ENCODE measurements at regions of chr14 and their contacts with region 1.

Region 1: DNA sequence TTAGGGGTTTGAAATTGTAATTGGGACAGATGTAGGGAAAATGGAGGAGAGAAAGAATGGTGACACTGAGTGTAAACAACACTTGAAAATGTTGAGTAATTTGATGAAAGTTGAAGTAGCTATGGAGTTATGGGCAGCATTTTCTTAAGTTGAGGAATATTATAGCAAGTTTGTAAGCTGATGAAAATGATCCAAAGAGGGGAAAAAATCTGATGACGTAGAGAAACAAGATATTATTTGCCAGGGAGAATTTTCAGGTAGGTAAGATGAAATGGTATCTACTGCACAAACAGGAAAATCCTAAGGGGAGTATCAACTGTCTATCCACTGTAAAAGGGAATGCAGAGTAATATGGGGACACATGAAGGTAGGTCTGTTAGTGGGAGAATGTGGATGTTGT is 517.4 kb downstream of the RPL10L start:
- DNase-seq: no peak
- ATAC-seq: no peak
- H3K4me3 ChIP-seq: no peak overlapping the region
- H3K27ac ChIP-seq: no peak overlapping the region
- H3K4me1 ChIP-seq: no peaks in the 10 kb centered on the region
- H3K27me3 ChIP-seq: no peaks in the 10 kb centered on the region
- CTCF ChIP-seq: no peak

Region 2: DNA sequence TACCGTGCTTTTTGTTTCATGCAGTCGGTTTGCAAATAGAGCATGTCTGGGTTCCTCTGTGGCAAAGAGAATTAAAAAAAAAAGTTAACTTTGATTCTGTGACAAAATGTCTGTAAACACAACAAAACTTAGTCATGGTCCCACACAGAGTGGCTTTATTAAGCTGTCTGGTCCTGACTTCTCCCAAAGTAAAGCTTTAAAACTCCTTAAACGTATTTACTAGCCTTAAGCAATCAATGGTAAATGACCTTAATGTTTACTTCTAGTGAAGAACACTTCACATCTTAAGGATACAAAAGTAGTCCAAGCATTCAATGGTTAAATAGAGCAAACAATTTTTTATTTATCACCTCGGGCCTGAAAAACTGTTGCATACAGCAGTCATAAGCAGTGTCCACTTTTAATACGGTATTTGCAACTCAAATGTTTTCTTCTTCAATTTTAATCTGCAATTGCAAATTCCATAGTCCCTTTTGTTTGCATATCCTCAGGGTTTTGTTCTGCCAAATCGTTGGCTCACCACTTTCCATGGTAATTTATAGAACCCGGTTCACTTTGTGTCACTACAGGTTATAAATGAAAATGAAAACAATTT is 428.1 kb before region 1 on chr14:
- intact Hi-C with region 1: no loop called
- DNase-seq: no peak
- ATAC-seq: no peak
- H3K4me3 ChIP-seq: no peak overlapping the region
- H3K27ac ChIP-seq: no peak overlapping the region
- H3K4me1 ChIP-seq: no peaks in the 10 kb centered on the region
- H3K27me3 ChIP-seq: no peaks in the 10 kb centered on the region
- CTCF ChIP-seq: no peak

Region 3: GRCh38 chr14:45940307-45940706 is 193.8 kb before region 1 on chr14:
- intact Hi-C with region 1: loop called in 1 of 10 experiments (anchors 10 kb)
- DNase-seq: no peak
- ATAC-seq: no peak
- H3K4me3 ChIP-seq: no peak overlapping the region
- H3K27ac ChIP-seq: no peak overlapping the region
- H3K4me1 ChIP-seq: no peaks in the 10 kb centered on the region
- H3K27me3 ChIP-seq: no peaks in the 10 kb centered on the region
- CTCF ChIP-seq: no peak

Region 4: DNA sequence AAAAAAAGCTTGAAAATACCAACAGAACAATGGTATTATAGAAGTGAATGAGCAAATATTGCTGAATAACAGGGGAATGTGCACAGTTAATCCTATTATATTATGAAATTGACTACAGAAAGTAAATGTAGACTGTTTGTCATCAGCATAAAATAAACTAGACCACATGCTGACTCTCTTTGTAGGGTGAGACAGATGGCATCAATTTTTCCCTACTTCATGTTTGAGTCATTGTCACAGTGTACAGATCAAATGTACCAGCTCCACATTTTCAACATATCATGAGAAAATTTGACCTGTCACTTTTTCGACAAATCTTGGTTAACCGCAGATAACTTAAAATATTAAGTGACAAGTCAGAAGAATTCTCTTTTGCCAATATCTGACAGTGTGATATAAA is 96.4 kb after region 1 on chr14:
- intact Hi-C with region 1: no loop called
- DNase-seq: no peak
- ATAC-seq: no peak
- H3K4me3 ChIP-seq: no peak overlapping the region
- H3K27ac ChIP-seq: no peak overlapping the region
- H3K4me1 ChIP-seq: no peaks in the 10 kb centered on the region
- H3K27me3 ChIP-seq: no peaks in the 10 kb centered on the region
- CTCF ChIP-seq: no peak

Measured in heart right ventricle (tissue), 16 donors.